CD4-positive, alpha-beta memory T cell (primary cell): ENCODE measurements at regions of chr3 and their contacts with region 1.

Region 1: DNA sequence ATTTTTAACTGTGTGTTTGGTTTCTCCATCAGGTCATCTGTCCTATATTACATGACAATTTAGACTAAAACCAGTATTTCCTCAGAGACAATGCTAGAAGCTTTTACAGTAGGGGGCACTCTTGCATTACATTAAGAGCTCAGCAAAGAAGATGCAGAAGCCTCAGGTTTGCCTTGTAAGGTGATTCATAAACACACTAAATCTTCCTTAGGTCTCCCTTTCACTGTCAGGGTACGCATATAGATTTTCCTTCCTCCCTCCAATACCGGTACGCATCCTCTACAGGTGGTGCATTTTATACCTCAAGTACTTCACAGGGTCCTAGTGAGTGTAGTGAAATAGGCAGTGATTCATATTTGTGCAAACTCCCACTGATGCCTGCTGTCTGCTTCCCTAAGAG is 46.5 kb downstream of the CD86 start:
- DNase-seq: peak in 4 of 5 donors; percentile 58 to 67 (median 60)
- H3K4me3 ChIP-seq: no peak overlapping the region
- H3K4me3 Mint-ChIP-seq: peak overlapping the region in 1 of 8 donors; percentile 37
- H3K27ac ChIP-seq: no peak overlapping the region
- H3K27ac Mint-ChIP-seq: no peak overlapping the region
- H3K4me1 ChIP-seq: peaks cover 7% of the 10 kb centered on the region
- H3K4me1 Mint-ChIP-seq: peaks cover 8 to 18% (median 9%) of the 10 kb centered on the region in 4 donors
- H3K27me3 ChIP-seq: peaks cover 8% of the 10 kb centered on the region
- H3K27me3 Mint-ChIP-seq: no peaks in the 10 kb centered on the region

Region 2: GRCh38 chr3:122258757-122259371 is 157.2 kb after region 1 on chr3:
- CTCF ChIA-PET with region 1: interaction called, 11 read pairs
- POLR2A ChIA-PET with region 1: interaction called, 3 read pairs
- intact Hi-C with region 1: loop called (anchors 1 kb)
- DNase-seq: peak; percentile 9 to 53 (median 32)
- H3K4me3 ChIP-seq: no peak overlapping the region
- H3K4me3 Mint-ChIP-seq: no peak overlapping the region
- H3K27ac ChIP-seq: no peak overlapping the region
- H3K27ac Mint-ChIP-seq: no peak overlapping the region
- H3K4me1 ChIP-seq: peaks cover 5% of the 10 kb centered on the region
- H3K4me1 Mint-ChIP-seq: peaks cover 0 to 11% (median 5%) of the 10 kb centered on the region in 4 donors
- H3K27me3 ChIP-seq: no peaks in the 10 kb centered on the region
- H3K27me3 Mint-ChIP-seq: peaks cover 0 to 5% of the 10 kb centered on the region in 2 donors

Region 3: DNA sequence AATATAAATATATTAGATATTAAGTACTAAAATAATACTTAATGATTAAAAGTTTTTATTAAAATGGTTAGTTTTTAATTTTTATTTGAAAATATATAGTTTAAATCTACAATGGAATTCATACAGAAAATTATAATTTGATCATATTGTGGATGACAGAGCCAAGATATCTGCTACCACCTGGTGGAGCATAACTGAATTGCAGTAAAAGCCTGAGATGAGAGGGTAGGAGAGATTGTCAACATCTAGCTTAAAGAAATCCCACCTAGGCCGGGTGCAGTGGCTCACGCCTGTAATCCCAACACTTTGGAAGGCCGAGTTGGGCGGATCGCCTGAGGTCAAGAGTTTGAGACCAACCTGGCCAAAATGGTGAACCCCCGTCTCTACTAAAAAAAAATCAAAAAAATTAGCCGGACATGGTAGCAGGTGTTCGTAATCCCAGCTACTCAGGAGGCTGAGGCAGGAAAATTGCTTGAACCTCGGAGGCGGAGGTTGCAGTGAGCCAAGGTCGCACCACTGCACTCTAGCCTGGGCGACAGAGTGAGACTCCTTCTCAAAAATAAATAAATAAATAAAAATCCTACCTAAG is 198.3 kb after region 1 on chr3:
- CTCF ChIA-PET with region 1: interaction called, 37 read pairs
- POLR2A ChIA-PET with region 1: no interaction called
- intact Hi-C with region 1: no loop called
- DNase-seq: peak in 4 of 5 donors; percentile 36 to 50 (median 48)
- H3K4me3 ChIP-seq: no peak overlapping the region
- H3K4me3 Mint-ChIP-seq: no peak overlapping the region
- H3K27ac ChIP-seq: no peak overlapping the region
- H3K27ac Mint-ChIP-seq: no peak overlapping the region
- H3K4me1 ChIP-seq: peaks cover 19% of the 10 kb centered on the region
- H3K4me1 Mint-ChIP-seq: peaks cover 5 to 19% (median 10%) of the 10 kb centered on the region in 4 donors
- H3K27me3 ChIP-seq: no peaks in the 10 kb centered on the region
- H3K27me3 Mint-ChIP-seq: peaks cover 0 to 3% of the 10 kb centered on the region in 2 donors